Posterior vena cava (tissue), 2 donors: ENCODE measurements at regions of chr12 and their contacts with region 1.

Region 1: GRCh38 chr12:5318874-5319273 is 113.0 kb upstream of the NTF3 start:
- DNase-seq: no peak

Region 2: GRCh38 chr12:6267139-6267721 is 948.4 kb after region 1 on chr12:
- intact Hi-C with region 1: loop called in 1 of 2 experiments (anchors 5 kb)
- DNase-seq: peak; percentile 3